ENCODE measurements at regions of chr10 and their contacts with region 1.

Region 1: GRCh38 chr10:79242620-79243152 is 104.6 kb upstream of the PPIF start:
- DNase-seq: peak; percentile 71
- ATAC-seq: peak; percentile 52
- H3K4me3 Mint-ChIP-seq: peak overlapping the region; percentile 84
- H3K27ac Mint-ChIP-seq: peak overlapping the region; percentile 50
- H3K4me1 Mint-ChIP-seq: peaks cover 57% of the 10 kb centered on the region
- H3K27me3 Mint-ChIP-seq: no peaks in the 10 kb centered on the region
- CTCF ChIP-seq: no peak

Region 2: DNA sequence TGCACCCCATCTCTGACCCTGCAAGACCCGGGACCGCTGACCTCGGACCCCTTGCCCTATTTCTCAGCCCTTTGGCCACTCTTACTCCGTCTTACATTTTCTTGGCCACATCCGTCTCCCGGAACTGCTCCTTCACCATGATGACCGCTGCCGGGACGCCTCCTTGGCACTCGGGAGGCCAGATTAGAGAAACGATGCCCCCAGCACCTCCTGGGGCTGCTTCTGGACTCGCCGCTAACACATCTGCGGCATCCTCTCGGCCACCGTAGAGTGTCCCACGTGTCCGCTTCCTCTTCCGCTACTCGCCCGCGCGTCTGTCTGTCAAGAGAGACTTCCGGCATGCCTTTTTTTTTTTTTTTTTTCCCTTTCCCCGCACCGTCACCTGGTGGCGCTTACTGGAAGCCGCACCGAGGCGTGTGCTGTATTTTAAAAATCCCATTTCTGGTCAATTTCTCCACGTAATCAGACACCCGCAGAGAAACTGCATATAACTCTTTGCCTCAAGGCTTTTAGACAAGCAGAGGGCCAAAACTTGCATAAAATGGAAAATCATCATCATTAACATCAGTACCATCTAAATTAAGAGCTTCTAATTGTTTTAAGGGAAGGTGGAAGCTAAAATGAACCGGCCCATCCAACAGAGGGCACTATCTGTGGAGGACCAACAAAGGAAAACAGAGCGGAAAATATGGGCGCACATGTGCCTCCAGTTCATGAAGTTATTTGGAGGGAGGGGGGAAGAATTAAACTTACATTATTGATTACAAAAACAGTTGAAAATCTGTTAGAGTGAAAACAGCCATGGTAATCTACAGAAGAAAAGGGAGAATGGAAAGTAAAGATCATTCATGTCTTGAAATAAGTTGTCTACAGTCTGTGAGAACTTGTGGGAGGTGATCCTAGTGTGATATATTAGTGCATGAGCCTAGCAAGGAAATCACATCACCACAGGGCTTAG is 1213.1 kb before region 1 on chr10 and contains the start of gene POLR3A:
- CTCF ChIA-PET with region 1: no interaction called
- POLR2A ChIA-PET with region 1: interaction called, 4 read pairs
- intact Hi-C with region 1: loop called (anchors 2 kb)
- DNase-seq: peak; percentile 85
- ATAC-seq: peak; percentile 57
- H3K4me3 Mint-ChIP-seq: peak within 1 kb of the TSS; percentile 99
- H3K27ac Mint-ChIP-seq: peak within 1 kb of the TSS; percentile 88
- H3K4me1 Mint-ChIP-seq: peaks cover 43% of the 10 kb centered on the region
- H3K27me3 Mint-ChIP-seq: no peaks in the 10 kb centered on the region
- CTCF ChIP-seq: no peak
- total RNA-seq, gene POLR3A: 17.0 and 20.3 TPM in 2 replicates

Region 3: GRCh38 chr10:79266543-79267312 is 24.0 kb after region 1 on chr10:
- CTCF ChIA-PET with region 1: no interaction called
- POLR2A ChIA-PET with region 1: interaction called, 311 read pairs
- intact Hi-C with region 1: loop called (anchors 1 kb)
- DNase-seq: peak; percentile 40
- ATAC-seq: peak; percentile 68
- H3K4me3 Mint-ChIP-seq: peak overlapping the region; percentile 69
- H3K27ac Mint-ChIP-seq: peak overlapping the region; percentile 92
- H3K4me1 Mint-ChIP-seq: peaks cover 96% of the 10 kb centered on the region
- H3K27me3 Mint-ChIP-seq: no peaks in the 10 kb centered on the region
- CTCF ChIP-seq: no peak

Region 4: GRCh38 chr10:79331709-79332108 is 89.0 kb after region 1 on chr10:
- CTCF ChIA-PET with region 1: interaction called, 3 read pairs
- POLR2A ChIA-PET with region 1: interaction called, 22 read pairs
- intact Hi-C with region 1: loop called (anchors 1 kb)
- DNase-seq: peak; percentile 57
- ATAC-seq: peak; percentile 93
- H3K4me3 Mint-ChIP-seq: peak overlapping the region; percentile 41
- H3K27ac Mint-ChIP-seq: peak overlapping the region; percentile 79
- H3K4me1 Mint-ChIP-seq: peaks cover 24% of the 10 kb centered on the region
- H3K27me3 Mint-ChIP-seq: no peaks in the 10 kb centered on the region
- CTCF ChIP-seq: no peak

Region 5: DNA sequence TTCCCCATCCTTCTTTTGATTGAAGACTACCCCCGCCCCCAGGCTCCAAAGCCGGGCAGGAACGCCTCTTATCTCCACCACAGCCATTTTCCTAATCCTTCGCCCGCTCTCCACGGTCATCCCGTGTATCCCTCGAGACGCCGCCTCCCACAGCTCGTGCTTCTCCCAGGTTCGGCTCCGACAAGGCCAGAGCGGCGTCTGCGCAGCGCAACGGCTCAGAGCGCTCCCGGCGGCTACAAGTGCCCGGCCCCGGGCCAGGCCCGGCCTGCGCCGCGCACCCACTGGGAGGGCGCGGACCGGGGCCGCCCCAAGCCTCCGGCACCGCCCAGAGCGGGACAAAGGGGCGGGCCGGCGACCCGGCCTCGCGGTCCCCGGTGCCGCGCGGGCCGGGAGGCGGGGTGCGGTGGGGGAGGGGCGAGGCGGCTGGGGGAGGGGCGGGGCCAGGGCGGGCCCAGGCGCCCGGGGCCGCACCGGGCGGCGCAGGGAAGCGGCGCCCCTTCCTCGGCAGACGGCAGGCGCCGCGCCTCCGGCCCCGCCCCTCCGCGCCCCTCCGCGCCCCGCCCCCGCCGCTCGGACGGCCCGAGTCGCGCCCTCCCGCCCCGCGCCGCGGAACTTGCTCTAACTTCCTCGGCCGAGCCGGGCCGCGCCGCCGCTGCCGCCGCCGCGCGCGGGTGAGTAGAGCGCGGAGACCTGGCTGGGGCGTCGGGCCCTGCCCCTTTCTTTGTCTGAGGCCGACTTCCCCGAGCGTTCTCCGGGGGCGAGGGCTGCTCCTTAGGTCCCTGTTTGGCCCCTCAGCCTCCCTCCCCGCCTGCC is 1211.2 kb after region 1 on chr10 and contains the start of gene TSPAN14:
- CTCF ChIA-PET with region 1: no interaction called
- POLR2A ChIA-PET with region 1: no interaction called
- intact Hi-C with region 1: loop called (anchors 10 kb)
- DNase-seq: peak; percentile 73
- ATAC-seq: peak; percentile 77
- H3K4me3 Mint-ChIP-seq: peak within 1 kb of the TSS; percentile 95
- H3K27ac Mint-ChIP-seq: peak within 1 kb of the TSS; percentile 89
- H3K4me1 Mint-ChIP-seq: peaks cover 50% of the 10 kb centered on the region
- H3K27me3 Mint-ChIP-seq: no peaks in the 10 kb centered on the region
- CTCF ChIP-seq: no peak
- total RNA-seq, gene TSPAN14: 18.9 and 20.7 TPM in 2 replicates